ENCODE measurements at regions of chr16 and their contacts with region 1.

Region 1: DNA sequence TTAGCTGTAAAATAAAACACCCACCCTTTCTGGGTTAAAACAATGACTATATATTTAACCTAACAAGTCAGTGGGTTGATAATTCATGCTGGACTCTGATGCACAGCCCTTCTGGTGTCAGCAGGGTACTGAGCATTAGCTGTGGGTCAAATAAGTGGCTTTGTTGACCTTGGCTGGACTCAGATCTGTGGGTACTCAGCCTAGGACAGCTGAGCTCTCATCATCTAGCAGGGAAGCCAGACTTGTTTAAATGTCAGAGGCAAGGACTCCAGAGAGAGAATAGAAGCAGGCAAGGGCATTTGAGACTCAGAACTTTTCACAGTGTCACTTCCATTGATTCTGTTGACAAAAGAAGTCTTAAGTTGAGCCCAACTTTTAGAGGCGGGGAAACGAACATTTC is 1063.8 kb upstream of the CDH8 start:
- DNase-seq: no peak
- H3K4me3 ChIP-seq: no peak overlapping the region
- H3K27ac ChIP-seq: no peak overlapping the region
- H3K27me3 ChIP-seq: no peaks in the 10 kb centered on the region
- CTCF ChIP-seq: no peak

Region 2: GRCh38 chr16:62863139-62863538 is 236.9 kb before region 1 on chr16:
- intact Hi-C with region 1: no loop called
- DNase-seq: no peak
- H3K4me3 ChIP-seq: no peak overlapping the region
- H3K27ac ChIP-seq: no peak overlapping the region
- H3K27me3 ChIP-seq: no peaks in the 10 kb centered on the region
- CTCF ChIP-seq: no peak

Region 3: DNA sequence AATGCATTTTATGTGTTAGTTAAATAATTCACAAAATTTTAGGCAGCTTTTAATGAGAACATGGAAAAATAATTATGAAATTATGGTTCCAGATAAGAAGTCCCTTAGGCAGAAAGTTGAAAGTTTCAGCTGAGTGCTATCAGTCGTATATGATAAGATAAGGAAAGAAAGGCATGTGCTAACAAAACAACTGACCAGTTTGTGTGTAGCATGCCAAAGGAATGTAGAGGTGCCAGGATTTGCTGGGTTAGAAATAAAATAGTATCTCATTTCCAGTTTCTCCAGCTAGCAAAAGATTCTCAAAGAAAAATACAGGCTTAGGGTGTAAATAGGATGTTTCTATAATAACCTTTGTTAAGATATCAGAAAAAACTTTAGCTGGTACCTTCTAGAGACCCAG is 19.3 kb before region 1 on chr16:
- intact Hi-C with region 1: loop called in 1 of 2 experiments (anchors 2 kb)
- DNase-seq: no peak
- H3K4me3 ChIP-seq: no peak overlapping the region
- H3K27ac ChIP-seq: no peak overlapping the region
- H3K27me3 ChIP-seq: no peaks in the 10 kb centered on the region
- CTCF ChIP-seq: no peak